Activated CD4-positive, alpha-beta T cell treated with anti-CD3 and anti-CD28 coated beads for 36 hours (primary cell): ENCODE measurements at regions of chr6 and their contacts with region 1.

Region 1: DNA sequence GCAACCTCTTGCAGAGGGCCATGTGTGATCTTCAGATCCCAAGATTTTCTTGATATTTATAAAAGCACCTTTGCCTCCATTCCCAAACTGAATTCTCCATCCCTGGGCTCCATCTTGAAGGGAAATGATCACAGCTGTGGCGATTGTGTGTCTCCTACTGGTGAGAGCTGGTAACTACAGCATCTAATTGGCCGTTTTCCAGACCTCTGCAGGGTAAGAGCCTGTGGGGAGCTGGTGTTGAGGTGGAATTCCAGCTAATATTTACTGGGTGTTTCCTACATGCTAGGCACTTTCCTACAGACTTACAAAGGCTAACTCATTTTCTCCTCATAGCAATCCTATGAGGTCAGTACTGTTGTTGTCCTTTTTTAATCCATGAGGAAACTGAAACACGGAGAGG is 59.2 kb upstream of the FNDC1 start:
- DNase-seq: peak; percentile 56
- ATAC-seq: no peak
- H3K4me3 Mint-ChIP-seq: no peak overlapping the region
- H3K27ac Mint-ChIP-seq: no peak overlapping the region
- H3K4me1 Mint-ChIP-seq: peaks cover 52% of the 10 kb centered on the region
- H3K27me3 Mint-ChIP-seq: no peaks in the 10 kb centered on the region

Region 2: DNA sequence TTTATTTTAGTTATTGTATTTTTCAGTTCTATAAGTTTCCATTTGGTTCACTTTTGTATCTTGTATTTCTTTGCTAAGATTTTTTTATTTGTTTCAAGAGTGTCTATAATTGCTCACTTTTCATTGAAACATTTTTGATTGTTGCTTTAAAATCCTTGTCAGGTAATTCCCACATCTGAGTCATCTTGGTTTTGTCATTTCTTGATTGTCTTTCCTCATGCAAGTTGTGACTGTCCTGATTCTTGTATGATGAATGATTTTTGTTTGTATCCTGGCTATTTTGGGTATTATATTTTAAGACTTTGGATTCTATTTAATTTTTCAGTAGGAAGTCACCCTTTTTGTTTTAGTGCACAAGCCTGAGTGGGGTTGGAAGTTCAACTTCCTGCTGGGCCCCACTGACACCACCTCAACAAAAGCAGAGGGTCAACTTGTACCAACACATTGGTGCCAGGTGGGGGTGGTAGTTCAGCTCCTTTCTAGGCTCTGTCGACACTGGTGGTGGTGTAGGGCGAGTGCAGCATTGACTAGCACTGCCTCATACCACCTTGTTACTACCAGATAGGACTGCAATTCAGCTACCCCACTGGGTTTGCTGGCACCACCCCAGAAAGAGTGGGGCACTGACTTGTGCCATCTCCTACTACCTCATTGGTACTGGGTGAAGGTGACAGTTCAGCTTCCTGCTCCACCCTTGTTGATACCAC is 118.8 kb before region 1 on chr6:
- CTCF ChIA-PET with region 1: interaction called, 13 read pairs
- POLR2A ChIA-PET with region 1: no interaction called
- intact Hi-C with region 1: no loop called
- DNase-seq: peak; percentile 60
- ATAC-seq: peak; percentile 60
- H3K4me3 Mint-ChIP-seq: no peak overlapping the region
- H3K27ac Mint-ChIP-seq: peak overlapping the region; percentile 20
- H3K4me1 Mint-ChIP-seq: peaks cover 43% of the 10 kb centered on the region
- H3K27me3 Mint-ChIP-seq: no peaks in the 10 kb centered on the region

Region 3: DNA sequence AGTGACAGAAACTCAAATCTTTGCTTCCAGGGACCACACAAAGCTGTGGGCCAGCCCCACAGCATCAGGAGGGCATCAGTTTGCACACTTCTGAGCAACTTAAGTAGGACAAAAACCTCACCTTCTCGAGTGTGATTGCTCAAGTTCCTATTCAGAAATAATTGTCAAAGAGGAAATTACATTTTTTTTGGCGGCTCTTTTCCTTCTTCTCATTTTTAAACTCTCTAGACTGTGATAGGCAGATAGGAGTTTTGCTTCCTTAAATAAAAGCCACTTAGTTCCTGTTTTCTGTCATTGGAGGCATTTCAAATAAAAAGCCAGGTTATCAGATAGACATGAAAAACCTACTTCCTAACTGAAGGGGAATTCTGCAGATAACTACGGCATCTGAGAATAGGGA is 54.0 kb before region 1 on chr6:
- CTCF ChIA-PET with region 1: interaction called, 12 read pairs
- POLR2A ChIA-PET with region 1: interaction called, 3 read pairs
- intact Hi-C with region 1: no loop called
- DNase-seq: no peak
- ATAC-seq: no peak
- H3K4me3 Mint-ChIP-seq: peak overlapping the region; percentile 13
- H3K27ac Mint-ChIP-seq: peak overlapping the region; percentile 89
- H3K4me1 Mint-ChIP-seq: peaks cover 67% of the 10 kb centered on the region
- H3K27me3 Mint-ChIP-seq: no peaks in the 10 kb centered on the region